Activated CD4-positive, alpha-beta memory T cell treated with anti-CD3 and anti-CD28 coated beads, Interleukin-2, amount 10 ng/mL, durations not matched to agents 7 days and 5 days (primary cell): ENCODE measurements at regions of chr1 and their contacts with region 1.

Region 1: GRCh38 chr1:23184212-23184934 is 15.7 kb upstream of the LUZP1 start:
- DNase-seq: peak; percentile 22
- H3K4me3 Mint-ChIP-seq: no peak overlapping the region
- H3K27ac Mint-ChIP-seq: no peak overlapping the region
- H3K4me1 Mint-ChIP-seq: peaks cover 8% of the 10 kb centered on the region
- H3K27me3 Mint-ChIP-seq: peaks cover 14% of the 10 kb centered on the region

Region 2: GRCh38 chr1:23092447-23092846 is 91.9 kb before region 1 on chr1:
- CTCF ChIA-PET with region 1: interaction called, 393 read pairs
- POLR2A ChIA-PET with region 1: interaction called, 39 read pairs
- DNase-seq: no peak
- H3K4me3 Mint-ChIP-seq: no peak overlapping the region
- H3K27ac Mint-ChIP-seq: no peak overlapping the region
- H3K4me1 Mint-ChIP-seq: no peaks in the 10 kb centered on the region
- H3K27me3 Mint-ChIP-seq: no peaks in the 10 kb centered on the region

Region 3: DNA sequence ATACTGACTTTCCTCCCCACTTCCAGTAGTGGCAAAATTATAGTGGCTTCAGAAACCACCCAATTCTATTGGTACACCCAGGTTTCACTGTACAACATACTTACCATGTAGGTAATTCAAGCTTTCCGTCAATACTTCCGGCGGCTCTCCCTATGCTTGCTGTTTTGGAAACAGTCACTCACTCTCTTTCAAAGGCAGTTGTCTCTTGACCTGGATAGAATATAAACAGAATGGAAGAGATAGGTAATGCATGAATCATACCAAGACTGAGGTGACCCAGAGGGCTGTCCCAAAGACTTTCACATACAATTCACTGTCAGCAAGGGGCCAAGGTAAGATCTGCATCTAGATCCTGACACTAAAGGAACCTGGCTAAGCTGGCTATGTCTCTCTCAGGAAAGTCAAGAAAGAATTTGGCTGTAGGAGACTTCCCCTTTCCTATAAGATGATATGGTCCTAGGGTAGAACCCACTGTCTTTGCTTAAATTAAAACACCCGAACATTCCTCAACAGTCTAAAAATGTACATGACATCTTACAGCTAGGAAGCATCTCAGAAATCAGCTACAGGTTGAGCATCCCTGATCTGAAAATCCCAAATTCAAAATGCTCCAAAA is 75.3 kb before region 1 on chr1:
- CTCF ChIA-PET with region 1: interaction called, 393 read pairs
- POLR2A ChIA-PET with region 1: interaction called, 5 read pairs
- DNase-seq: peak; percentile 29
- H3K4me3 Mint-ChIP-seq: no peak overlapping the region
- H3K27ac Mint-ChIP-seq: no peak overlapping the region
- H3K4me1 Mint-ChIP-seq: peaks cover 63% of the 10 kb centered on the region
- H3K27me3 Mint-ChIP-seq: no peaks in the 10 kb centered on the region

Region 4: GRCh38 chr1:23132033-23132432 is 52.3 kb before region 1 on chr1:
- CTCF ChIA-PET with region 1: interaction called, 10 read pairs
- POLR2A ChIA-PET with region 1: no interaction called
- DNase-seq: no peak
- H3K4me3 Mint-ChIP-seq: no peak overlapping the region
- H3K27ac Mint-ChIP-seq: no peak overlapping the region
- H3K4me1 Mint-ChIP-seq: peaks cover 3% of the 10 kb centered on the region
- H3K27me3 Mint-ChIP-seq: no peaks in the 10 kb centered on the region

Region 5: GRCh38 chr1:23168457-23169194 is 15.7 kb before region 1 on chr1 and contains the start of gene LUZP1:
- CTCF ChIA-PET with region 1: interaction called, 34 read pairs
- POLR2A ChIA-PET with region 1: interaction called, 3 read pairs
- DNase-seq: peak; percentile 88
- H3K4me3 Mint-ChIP-seq: peak within 1 kb of the TSS; percentile 91
- H3K27ac Mint-ChIP-seq: peak within 1 kb of the TSS; percentile 74
- H3K4me1 Mint-ChIP-seq: peaks cover 28% of the 10 kb centered on the region
- H3K27me3 Mint-ChIP-seq: peaks cover 2% of the 10 kb centered on the region
- total RNA-seq, gene LUZP1: 19.4 to 21.8 TPM

Region 6: GRCh38 chr1:23296931-23297330 is 112.6 kb after region 1 on chr1:
- CTCF ChIA-PET with region 1: no interaction called
- POLR2A ChIA-PET with region 1: no interaction called
- DNase-seq: no peak
- H3K4me3 Mint-ChIP-seq: no peak overlapping the region
- H3K27ac Mint-ChIP-seq: no peak overlapping the region
- H3K4me1 Mint-ChIP-seq: no peaks in the 10 kb centered on the region
- H3K27me3 Mint-ChIP-seq: no peaks in the 10 kb centered on the region